ENCODE measurements at regions of chr18 and their contacts with region 1.

Region 1: GRCh38 chr18:70082430-70082829 is 123.1 kb downstream of the RTTN start:
- DNase-seq: no peak
- ATAC-seq: no peak
- H3K4me3 Mint-ChIP-seq: no peak overlapping the region
- H3K27ac Mint-ChIP-seq: no peak overlapping the region
- H3K4me1 Mint-ChIP-seq: peaks cover 2% of the 10 kb centered on the region
- H3K27me3 Mint-ChIP-seq: no peaks in the 10 kb centered on the region

Region 2: DNA sequence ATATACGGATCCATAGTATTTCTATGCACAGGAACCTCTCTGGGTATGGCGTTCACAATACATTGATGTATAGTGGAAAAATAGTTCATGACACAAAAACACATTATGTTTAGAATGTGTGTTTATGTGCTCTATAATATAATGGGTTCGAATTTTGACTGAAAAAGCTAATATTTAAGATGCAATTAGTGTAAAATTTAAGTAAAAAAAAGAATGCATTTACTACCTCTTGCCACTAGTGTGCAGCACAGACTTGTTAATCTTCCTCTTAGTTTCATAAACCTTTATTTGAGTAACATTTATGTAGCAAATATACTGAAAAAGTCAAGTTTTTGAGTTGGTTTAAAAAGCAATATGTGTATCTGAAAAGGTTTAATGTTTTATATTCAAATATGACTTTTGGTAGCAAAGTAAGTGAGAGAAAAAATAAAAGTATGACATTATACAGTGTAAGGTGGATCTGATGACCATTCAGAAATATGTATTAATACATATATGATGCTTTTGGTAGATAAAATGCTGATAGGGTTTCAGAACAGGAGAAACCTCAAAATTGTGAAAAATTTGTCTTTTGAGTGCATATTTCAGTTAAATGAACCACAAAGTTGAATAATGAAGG is 1235.1 kb before region 1 on chr18:
- CTCF ChIA-PET with region 1: interaction called, 3 read pairs
- POLR2A ChIA-PET with region 1: no interaction called
- intact Hi-C with region 1: loop called (anchors 1 kb)
- DNase-seq: no peak
- ATAC-seq: no peak
- H3K4me3 Mint-ChIP-seq: no peak overlapping the region
- H3K27ac Mint-ChIP-seq: no peak overlapping the region
- H3K4me1 Mint-ChIP-seq: no peaks in the 10 kb centered on the region
- H3K27me3 Mint-ChIP-seq: no peaks in the 10 kb centered on the region

Region 3: DNA sequence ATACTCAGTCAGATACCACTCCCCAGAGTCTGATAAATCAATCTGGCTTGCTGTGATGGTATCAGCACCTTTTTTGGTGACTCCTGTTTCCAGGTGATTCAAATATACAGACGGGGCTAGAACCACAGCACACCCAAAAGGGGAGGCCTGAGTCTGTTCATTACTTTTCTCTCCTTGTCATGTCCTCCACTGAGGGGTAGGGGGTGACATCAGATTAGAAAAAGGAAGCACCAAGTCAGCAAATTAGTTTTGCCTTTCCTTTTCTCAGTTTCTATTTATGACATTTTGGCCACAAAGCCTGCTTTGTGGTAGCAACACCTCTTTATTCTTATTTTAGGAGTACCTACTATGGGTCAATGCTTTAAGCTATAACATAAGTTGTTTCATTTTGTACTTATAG is 1157.2 kb before region 1 on chr18:
- CTCF ChIA-PET with region 1: no interaction called
- POLR2A ChIA-PET with region 1: no interaction called
- intact Hi-C with region 1: loop called in 1 of 2 experiments (anchors 10 kb)
- DNase-seq: no peak
- ATAC-seq: peak; percentile 44
- H3K4me3 Mint-ChIP-seq: no peak overlapping the region
- H3K27ac Mint-ChIP-seq: no peak overlapping the region
- H3K4me1 Mint-ChIP-seq: no peaks in the 10 kb centered on the region
- H3K27me3 Mint-ChIP-seq: no peaks in the 10 kb centered on the region

Region 4: GRCh38 chr18:69469444-69469919 is 612.9 kb before region 1 on chr18:
- CTCF ChIA-PET with region 1: no interaction called
- POLR2A ChIA-PET with region 1: no interaction called
- intact Hi-C with region 1: loop called (anchors 1 to 2 kb)
- DNase-seq: peak; percentile 76
- ATAC-seq: peak; percentile 94
- H3K4me3 Mint-ChIP-seq: no peak overlapping the region
- H3K27ac Mint-ChIP-seq: peak overlapping the region; percentile 67
- H3K4me1 Mint-ChIP-seq: peaks cover 2% of the 10 kb centered on the region
- H3K27me3 Mint-ChIP-seq: peaks cover 4% of the 10 kb centered on the region

Region 5: GRCh38 chr18:69636529-69637301 is 445.7 kb before region 1 on chr18:
- CTCF ChIA-PET with region 1: interaction called, 5 read pairs
- POLR2A ChIA-PET with region 1: no interaction called
- intact Hi-C with region 1: loop called (anchors 1 to 2 kb)
- DNase-seq: peak; percentile 54
- ATAC-seq: peak; percentile 73
- H3K4me3 Mint-ChIP-seq: no peak overlapping the region
- H3K27ac Mint-ChIP-seq: no peak overlapping the region
- H3K4me1 Mint-ChIP-seq: no peaks in the 10 kb centered on the region
- H3K27me3 Mint-ChIP-seq: peaks cover 2% of the 10 kb centered on the region